Aorta (tissue), 5 donors: ENCODE measurements at regions of chr12 and their contacts with region 1.

Region 1: GRCh38 chr12:99746538-99746937 is 99.0 kb downstream of the GARIN6 start:
- DNase-seq: no peak
- ATAC-seq: no peak
- H3K4me3 ChIP-seq: no peak overlapping the region
- H3K27ac ChIP-seq: no peak overlapping the region
- H3K4me1 ChIP-seq: peaks cover 2 to 5% of the 10 kb centered on the region in 2 donors
- H3K27me3 ChIP-seq: no peaks in the 10 kb centered on the region

Region 2: DNA sequence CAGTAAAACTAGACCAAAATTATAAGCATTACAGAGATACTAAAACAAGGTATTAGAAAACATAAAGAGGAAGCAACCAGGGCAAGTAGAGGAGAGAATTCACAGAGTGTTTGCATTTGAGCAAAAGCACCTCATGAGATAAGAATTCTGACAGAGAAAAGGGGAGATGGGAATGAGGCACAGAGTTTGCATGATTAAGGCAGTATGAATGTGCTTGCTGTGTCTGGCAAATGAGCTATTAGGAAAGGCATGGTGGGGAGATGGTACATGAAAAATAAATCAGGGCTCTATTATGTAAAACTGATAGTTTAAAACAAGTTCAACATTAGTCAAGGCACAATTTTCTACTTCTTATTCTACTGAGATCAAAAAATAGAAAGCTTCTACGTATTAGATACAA is 75.9 kb before region 1 on chr12:
- intact Hi-C with region 1: loop called in 1 of 2 experiments (anchors 10 kb)
- DNase-seq: no peak
- ATAC-seq: no peak
- H3K4me3 ChIP-seq: no peak overlapping the region
- H3K27ac ChIP-seq: no peak overlapping the region
- H3K4me1 ChIP-seq: no peaks in the 10 kb centered on the region
- H3K27me3 ChIP-seq: no peaks in the 10 kb centered on the region